OCI-LY7 (cell line): ENCODE measurements at regions of chr3 and their contacts with region 1.

Region 1: GRCh38 chr3:191340976-191341375 is 10.7 kb upstream of the UTS2B start:
- DNase-seq: no peak
- H3K4me3 ChIP-seq: no peak overlapping the region
- H3K27ac ChIP-seq: no peak overlapping the region
- H3K4me1 ChIP-seq: peaks cover 19% of the 10 kb centered on the region
- CTCF ChIP-seq: no peak

Region 2: GRCh38 chr3:191227541-191227940 is 113.4 kb before region 1 on chr3:
- CTCF ChIA-PET with region 1: no interaction called
- POLR2A ChIA-PET with region 1: no interaction called
- intact Hi-C with region 1: no loop called
- DNase-seq: no peak
- H3K4me3 ChIP-seq: no peak overlapping the region
- H3K27ac ChIP-seq: no peak overlapping the region
- H3K4me1 ChIP-seq: no peaks in the 10 kb centered on the region
- CTCF ChIP-seq: no peak

Region 3: GRCh38 chr3:191328962-191329653 is 11.9 kb before region 1 on chr3 and contains the start of gene CCDC50:
- CTCF ChIA-PET with region 1: no interaction called
- POLR2A ChIA-PET with region 1: interaction called, 14 read pairs
- intact Hi-C with region 1: no loop called
- DNase-seq: peak; percentile 82
- H3K4me3 ChIP-seq: peak within 1 kb of the TSS; percentile 95
- H3K27ac ChIP-seq: peak within 1 kb of the TSS; percentile 62
- H3K4me1 ChIP-seq: peaks cover 57% of the 10 kb centered on the region
- CTCF ChIP-seq: no peak
- total RNA-seq, gene CCDC50: 31.4 and 32.2 TPM in 2 replicates